ENCODE measurements at regions of chr7 and their contacts with region 1.

Region 1: GRCh38 chr7:105346593-105347322 is 42.0 kb downstream of the SRPK2 start:
- DNase-seq: no peak
- ATAC-seq: no peak
- H3K4me3 ChIP-seq: no peak overlapping the region
- H3K27ac ChIP-seq: no peak overlapping the region
- H3K4me1 ChIP-seq: 0 out of 2 replicates have a peak, but pooled peaks cover 2% of the 10 kb centered on the region
- H3K27me3 ChIP-seq: no peaks in the 10 kb centered on the region
- CTCF ChIP-seq: no peak
- POLR2A ChIP-seq: no peak
- RAD21 ChIP-seq: no peak

Region 2: GRCh38 chr7:105244592-105244991 is 102.2 kb before region 1 on chr7:
- CTCF ChIA-PET with region 1: no interaction called
- POLR2A ChIA-PET with region 1: interaction called, 11 read pairs
- dilution Hi-C with region 1: no loop called
- in situ Hi-C with region 1: no loop called
- intact Hi-C with region 1: no loop called
- DNase-seq: no peak
- ATAC-seq: no peak
- H3K4me3 ChIP-seq: no peak overlapping the region
- H3K27ac ChIP-seq: no peak overlapping the region
- H3K4me1 ChIP-seq: peaks cover 5% of the 10 kb centered on the region
- H3K27me3 ChIP-seq: no peaks in the 10 kb centered on the region
- CTCF ChIP-seq: no peak
- POLR2A ChIP-seq: no peak
- RAD21 ChIP-seq: no peak

Measured in IMR-90 (cell line).